Posterior vena cava (tissue), 2 donors: ENCODE measurements at regions of chr12 and their contacts with region 1.

Region 1: DNA sequence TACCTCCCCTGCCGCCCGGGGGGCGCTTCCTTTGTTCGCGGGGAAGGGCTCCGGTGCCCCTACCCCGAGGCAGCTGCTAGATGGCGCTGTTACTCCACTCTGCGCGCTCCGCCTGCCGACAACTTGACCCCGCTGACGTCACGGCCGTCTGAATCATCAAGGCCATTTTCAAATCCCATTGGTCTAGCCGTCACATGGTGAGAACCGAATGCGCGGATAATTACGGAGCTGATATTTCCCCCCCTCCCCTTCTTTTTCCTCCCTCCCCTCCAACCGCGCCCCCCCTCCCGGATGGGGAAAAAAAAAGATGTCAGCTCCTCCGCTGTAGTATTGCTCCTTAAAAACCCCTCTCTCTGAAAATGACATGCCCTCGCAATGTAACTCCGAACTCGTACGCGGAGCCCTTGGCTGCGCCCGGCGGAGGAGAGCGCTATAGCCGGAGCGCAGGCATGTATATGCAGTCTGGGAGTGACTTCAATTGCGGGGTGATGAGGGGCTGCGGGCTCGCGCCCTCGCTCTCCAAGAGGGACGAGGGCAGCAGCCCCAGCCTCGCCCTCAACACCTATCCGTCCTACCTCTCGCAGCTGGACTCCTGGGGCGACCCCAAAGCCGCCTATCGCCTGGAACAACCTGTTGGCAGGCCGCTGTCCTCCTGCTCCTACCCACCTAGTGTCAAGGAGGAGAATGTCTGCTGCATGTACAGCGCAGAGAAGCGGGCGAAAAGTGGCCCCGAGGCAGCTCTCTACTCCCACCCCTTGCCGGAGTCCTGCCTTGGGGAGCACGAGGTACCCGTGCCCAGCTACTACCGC is at the start of gene HOXC10:
- DNase-seq: peak; percentile 98
- total RNA-seq, gene HOXC10: 27.9 to 35.5 TPM

Region 2: GRCh38 chr12:54005853-54006686 is 21.0 kb after region 1 on chr12:
- intact Hi-C with region 1: loop called in 1 of 2 experiments (anchors 1 kb)
- DNase-seq: peak; percentile 97

Region 3: DNA sequence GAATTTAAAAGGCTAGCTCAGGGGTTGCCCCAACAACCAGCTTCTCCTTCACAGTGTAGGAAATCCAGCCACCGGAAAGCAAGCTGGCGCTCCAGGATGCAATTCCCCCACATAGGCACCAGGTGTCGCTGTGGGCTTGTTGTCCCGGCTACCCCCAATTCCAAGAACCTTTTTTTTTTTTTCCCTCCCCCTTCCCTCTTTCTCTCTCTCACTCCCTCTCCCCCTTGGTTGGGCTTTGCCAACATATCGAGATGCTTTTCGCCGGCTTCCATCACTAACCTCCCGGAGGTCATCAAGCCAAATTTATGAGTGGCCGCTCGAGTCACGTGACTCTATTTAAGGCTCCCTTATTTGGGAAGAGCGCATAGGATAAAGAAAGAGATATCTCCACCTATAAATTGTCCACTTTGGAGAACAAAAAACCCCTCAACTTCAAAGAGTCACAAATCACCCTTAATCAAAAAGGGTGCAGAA is 47.6 kb after region 1 on chr12 and contains the start of gene HOXC5:
- intact Hi-C with region 1: loop called in 1 of 2 experiments (anchors 5 kb)
- DNase-seq: peak; percentile 93
- total RNA-seq, gene HOXC5: 2.9 to 5.6 TPM

Region 4: GRCh38 chr12:54173066-54173726 is 188.1 kb after region 1 on chr12:
- intact Hi-C with region 1: loop called in 1 of 2 experiments (anchors 1 kb)
- DNase-seq: no peak

Region 5: DNA sequence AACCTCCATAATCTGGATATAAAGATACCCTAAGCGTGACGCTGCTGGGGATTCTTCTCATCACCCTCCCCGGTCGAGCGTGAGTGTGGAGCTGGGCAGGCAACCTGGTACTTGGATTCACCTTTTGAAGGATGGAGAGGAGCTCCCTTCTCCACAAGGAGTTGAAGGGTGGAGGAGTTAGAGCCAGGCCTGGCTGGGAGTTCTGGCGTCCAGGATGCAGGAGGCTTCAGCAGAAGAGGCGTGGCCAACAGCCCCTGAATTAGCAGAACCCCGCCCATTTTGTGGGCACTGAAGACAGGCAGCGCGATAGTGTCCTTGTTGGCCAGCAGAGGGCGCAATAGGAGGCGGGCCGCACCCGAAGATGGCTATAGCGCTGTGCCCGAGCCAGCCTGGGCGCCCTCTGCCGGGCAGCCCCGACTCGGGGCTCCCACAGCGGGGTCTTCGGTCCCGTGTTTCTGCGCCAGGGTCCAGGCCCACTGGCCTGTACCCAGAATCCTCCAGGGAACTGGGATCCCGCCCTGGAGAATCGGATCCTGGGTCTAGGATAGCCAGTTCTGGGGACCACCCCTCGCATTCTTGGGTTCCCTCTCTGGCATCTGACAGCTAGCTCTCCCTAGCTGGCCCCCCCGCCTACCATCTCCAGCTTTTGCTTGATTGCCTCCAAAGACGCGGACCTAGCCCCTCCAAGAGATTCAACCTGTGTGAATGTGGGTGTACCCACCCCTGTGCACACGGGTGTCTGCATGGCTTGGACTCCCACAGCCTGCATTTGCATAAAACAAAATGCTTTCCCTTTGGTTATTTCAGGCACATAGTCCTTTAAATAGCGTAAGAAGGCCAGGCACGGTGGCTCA is 229.7 kb after region 1 on chr12:
- intact Hi-C with region 1: loop called in 1 of 2 experiments (anchors 5 kb)
- DNase-seq: peak; percentile 96

Region 6: DNA sequence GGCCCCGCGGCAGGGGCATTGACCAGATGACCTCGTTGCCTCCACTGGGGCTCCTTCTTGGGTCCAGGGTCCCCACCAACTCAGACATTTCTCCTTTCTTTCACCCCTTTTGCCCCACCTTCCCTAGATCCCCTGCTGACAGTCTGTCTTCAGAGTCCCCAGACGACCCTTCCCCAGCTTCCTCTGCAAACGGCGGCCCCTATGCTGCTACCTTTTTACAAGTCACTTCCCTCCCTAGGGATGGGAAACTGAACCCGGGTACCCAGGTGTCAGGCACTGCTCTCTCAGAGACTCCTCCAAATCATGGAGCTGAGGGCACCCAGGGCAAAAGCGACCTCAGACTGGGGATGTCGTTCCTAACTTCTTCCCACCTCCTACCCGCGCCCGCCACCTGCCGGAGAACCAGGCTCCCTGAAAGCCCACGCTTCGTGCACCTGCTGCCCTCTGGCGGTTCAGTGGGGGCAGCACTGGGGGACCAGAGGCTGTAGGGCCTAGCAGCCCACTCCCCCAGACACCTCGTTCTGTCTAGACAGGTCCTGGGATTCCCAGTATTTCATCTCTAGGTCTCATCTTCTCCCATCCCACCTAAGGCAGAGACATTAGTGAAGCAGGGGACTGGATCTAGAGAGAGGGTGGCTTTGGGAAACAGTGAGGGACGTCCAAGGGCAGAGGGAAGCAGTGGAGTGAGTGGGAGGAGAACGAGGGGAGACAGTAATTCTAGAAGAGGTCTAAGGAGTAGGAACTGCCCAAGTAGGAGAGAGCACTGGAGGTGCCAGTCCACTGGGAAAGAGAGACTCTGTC is 394.5 kb after region 1 on chr12:
- intact Hi-C with region 1: loop called in 1 of 2 experiments (anchors 10 kb)
- DNase-seq: peak; percentile 98